IMR-90 (cell line): ENCODE measurements at regions of chr6 and their contacts with region 1.

Region 1: GRCh38 chr6:70459235-70459634 is 45.9 kb downstream of the FAM135A start:
- DNase-seq: no peak
- ATAC-seq: no peak
- H3K4me3 ChIP-seq: no peak overlapping the region
- H3K27ac ChIP-seq: no peak overlapping the region
- H3K4me1 ChIP-seq: no peaks in the 10 kb centered on the region
- H3K27me3 ChIP-seq: no peaks in the 10 kb centered on the region
- CTCF ChIP-seq: no peak
- POLR2A ChIP-seq: no peak
- RAD21 ChIP-seq: no peak

Region 2: GRCh38 chr6:70270287-70271005 is 188.8 kb before region 1 on chr6:
- CTCF ChIA-PET with region 1: no interaction called
- POLR2A ChIA-PET with region 1: no interaction called
- dilution Hi-C with region 1: no loop called
- in situ Hi-C with region 1: no loop called
- intact Hi-C with region 1: no loop called
- DNase-seq: no peak
- ATAC-seq: no peak
- H3K4me3 ChIP-seq: no peak overlapping the region
- H3K27ac ChIP-seq: no peak overlapping the region
- H3K4me1 ChIP-seq: no peaks in the 10 kb centered on the region
- H3K27me3 ChIP-seq: no peaks in the 10 kb centered on the region
- CTCF ChIP-seq: no peak
- POLR2A ChIP-seq: no peak
- RAD21 ChIP-seq: no peak

Region 3: DNA sequence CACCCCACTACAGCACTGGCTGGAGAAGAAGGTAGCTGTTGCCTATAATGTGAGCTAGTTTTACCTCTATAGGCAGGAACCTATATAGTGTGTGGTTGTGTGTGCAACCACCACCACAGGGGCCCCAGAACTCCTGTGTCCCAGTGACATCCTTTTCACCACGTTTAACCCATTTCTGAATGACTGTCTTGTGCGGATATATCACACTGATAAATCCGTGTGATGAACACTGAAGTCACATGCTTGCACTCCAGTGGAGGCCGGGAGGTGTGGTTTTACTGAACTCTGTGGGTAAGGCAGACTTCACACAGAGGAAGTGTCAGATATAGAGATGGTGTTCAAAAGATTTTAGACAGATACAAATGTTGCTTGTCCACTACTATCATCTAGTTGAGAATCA is 140.0 kb after region 1 on chr6:
- CTCF ChIA-PET with region 1: interaction called, 11 read pairs
- POLR2A ChIA-PET with region 1: no interaction called
- dilution Hi-C with region 1: no loop called
- in situ Hi-C with region 1: no loop called
- intact Hi-C with region 1: no loop called
- DNase-seq: no peak
- ATAC-seq: no peak
- H3K4me3 ChIP-seq: no peak overlapping the region
- H3K27ac ChIP-seq: no peak overlapping the region
- H3K4me1 ChIP-seq: no peaks in the 10 kb centered on the region
- H3K27me3 ChIP-seq: no peaks in the 10 kb centered on the region
- CTCF ChIP-seq: no peak
- POLR2A ChIP-seq: no peak
- RAD21 ChIP-seq: no peak